ENCODE measurements at regions of chr4 and their contacts with region 1.

Region 1: DNA sequence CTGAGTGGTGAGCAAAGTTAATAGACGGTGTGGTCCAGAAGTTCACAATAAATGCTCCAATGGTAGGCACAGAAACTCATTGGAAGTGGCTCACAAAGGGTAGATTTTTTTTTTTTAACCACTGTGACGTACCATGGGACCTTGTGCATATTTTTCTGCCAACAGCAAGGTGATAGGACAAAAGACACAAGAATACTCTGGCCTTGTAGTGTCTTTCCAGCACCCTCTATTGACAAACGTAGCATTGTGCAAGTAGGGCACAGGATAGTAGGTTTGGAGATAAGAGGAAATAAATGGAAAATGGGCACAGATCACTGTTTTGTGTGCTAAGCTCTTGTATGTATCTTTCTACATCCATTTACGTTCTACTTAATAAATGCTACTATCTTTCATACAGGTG is 2054.9 kb downstream of the PCDH7 start:
- DNase-seq: no peak
- H3K4me3 ChIP-seq: no peak overlapping the region
- H3K27ac ChIP-seq: no peak overlapping the region
- H3K4me1 ChIP-seq: no peaks in the 10 kb centered on the region
- H3K27me3 ChIP-seq: no peaks in the 10 kb centered on the region
- CTCF ChIP-seq: no peak
- POLR2A ChIP-seq: no peak

Region 2: GRCh38 chr4:31370866-31371465 is 1404.1 kb before region 1 on chr4:
- CTCF ChIA-PET with region 1: no interaction called
- POLR2A ChIA-PET with region 1: no interaction called
- dilution Hi-C with region 1: no loop called
- intact Hi-C with region 1: loop called (anchors 10 kb)
- DNase-seq: peak; percentile 60
- H3K4me3 ChIP-seq: no peak overlapping the region
- H3K27ac ChIP-seq: no peak overlapping the region
- H3K4me1 ChIP-seq: no peaks in the 10 kb centered on the region
- H3K27me3 ChIP-seq: no peaks in the 10 kb centered on the region
- CTCF ChIP-seq: peak; percentile 53 to 62
- POLR2A ChIP-seq: no peak

Region 3: GRCh38 chr4:32462944-32463343 is 312.1 kb before region 1 on chr4:
- CTCF ChIA-PET with region 1: no interaction called
- POLR2A ChIA-PET with region 1: no interaction called
- dilution Hi-C with region 1: no loop called
- intact Hi-C with region 1: loop called (anchors 1 kb)
- DNase-seq: peak; percentile 5
- H3K4me3 ChIP-seq: no peak overlapping the region
- H3K27ac ChIP-seq: no peak overlapping the region
- H3K4me1 ChIP-seq: no peaks in the 10 kb centered on the region
- H3K27me3 ChIP-seq: no peaks in the 10 kb centered on the region
- CTCF ChIP-seq: peak; percentile 27 to 29
- POLR2A ChIP-seq: no peak

Region 4: DNA sequence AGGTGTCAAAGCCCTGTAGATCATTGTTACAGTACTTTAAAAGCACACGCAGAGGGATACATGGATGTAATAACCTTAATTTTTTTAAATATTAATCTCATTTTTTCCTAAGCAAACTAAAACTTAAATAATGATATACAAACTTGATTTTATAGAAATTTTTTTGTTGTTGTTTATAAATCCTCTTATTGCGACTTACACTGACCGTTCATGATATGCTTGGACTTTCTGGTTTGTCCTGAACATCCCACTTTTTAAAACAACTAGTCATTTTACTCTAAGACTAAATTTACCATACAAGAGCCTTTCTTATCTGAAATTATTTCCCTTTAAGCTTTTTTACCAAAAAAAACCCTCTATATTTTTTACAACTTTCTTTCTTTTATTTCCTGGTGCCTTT is 51.1 kb after region 1 on chr4:
- CTCF ChIA-PET with region 1: no interaction called
- POLR2A ChIA-PET with region 1: no interaction called
- dilution Hi-C with region 1: no loop called
- intact Hi-C with region 1: no loop called
- DNase-seq: no peak
- H3K4me3 ChIP-seq: no peak overlapping the region
- H3K27ac ChIP-seq: no peak overlapping the region
- H3K4me1 ChIP-seq: no peaks in the 10 kb centered on the region
- H3K27me3 ChIP-seq: no peaks in the 10 kb centered on the region
- CTCF ChIP-seq: no peak
- POLR2A ChIP-seq: no peak

Measured in endothelial cell of umbilical vein (primary cell).